ENCODE measurements at regions of chr13 and their contacts with region 1.

Region 1: DNA sequence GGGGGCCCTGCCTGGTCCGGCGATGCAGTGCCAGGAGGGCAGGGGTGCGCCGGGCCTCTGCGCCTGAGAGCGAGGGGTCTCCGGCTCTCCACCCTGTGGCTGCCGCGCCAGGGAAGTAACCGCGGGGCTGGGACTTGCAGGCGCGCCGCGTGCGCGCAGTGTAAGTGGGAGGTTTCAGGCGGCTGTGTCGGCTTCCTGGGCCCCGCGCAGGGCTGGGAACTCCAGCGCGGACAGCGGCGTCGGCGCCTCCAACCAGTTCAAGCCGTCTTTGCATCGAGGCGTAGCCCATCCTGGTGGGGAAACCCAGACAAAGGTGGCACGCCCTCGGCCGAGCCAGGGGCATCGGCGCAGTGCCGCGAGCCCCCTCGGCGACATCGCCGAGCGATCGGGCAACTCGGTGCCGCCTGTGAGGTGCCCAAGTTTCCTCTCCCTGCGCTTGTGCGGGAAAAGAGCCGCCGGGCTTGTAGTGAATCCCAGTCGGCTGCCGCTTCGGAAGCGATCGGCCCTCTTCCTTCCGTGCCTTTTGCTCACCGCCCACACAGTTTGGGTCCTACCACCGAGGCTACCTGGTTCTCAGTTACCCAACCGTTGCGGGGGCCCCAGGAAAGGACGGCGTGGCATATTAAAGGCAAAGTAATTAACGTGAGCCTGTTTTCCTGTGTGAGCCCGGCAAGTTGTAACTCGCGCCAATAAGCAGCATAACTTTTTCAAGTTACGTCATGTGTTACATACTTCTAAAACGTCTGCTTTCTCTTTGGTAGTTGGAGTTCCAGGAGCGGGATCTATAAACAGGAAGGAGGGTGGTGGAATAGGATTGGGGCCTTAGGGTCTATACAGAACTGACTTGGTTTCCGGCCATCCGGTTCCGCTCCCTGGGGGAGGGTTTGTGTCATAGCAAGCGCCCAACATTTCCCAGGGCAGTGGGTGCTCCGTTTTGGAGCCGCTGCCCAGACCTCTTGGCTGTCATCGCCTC is 1.2 kb downstream of the LRCH1 start:
- DNase-seq: peak; percentile 82
- H3K4me3 ChIP-seq: peak overlapping the region; percentile 86
- H3K27ac ChIP-seq: peak overlapping the region; percentile 74
- H3K4me1 ChIP-seq: peaks cover 40% of the 10 kb centered on the region
- CTCF ChIP-seq: 0 out of 2 replicates have a peak, but pooled peaks have one; percentile 10

Region 2: GRCh38 chr13:46369506-46370277 is 184.5 kb before region 1 on chr13:
- CTCF ChIA-PET with region 1: no interaction called
- POLR2A ChIA-PET with region 1: interaction called, 3 read pairs
- intact Hi-C with region 1: loop called (anchors 5 kb)
- DNase-seq: peak; percentile 57
- H3K4me3 ChIP-seq: peak overlapping the region; percentile 83
- H3K27ac ChIP-seq: peak overlapping the region; percentile 96
- H3K4me1 ChIP-seq: peaks cover 54% of the 10 kb centered on the region
- CTCF ChIP-seq: no peak

Region 3: DNA sequence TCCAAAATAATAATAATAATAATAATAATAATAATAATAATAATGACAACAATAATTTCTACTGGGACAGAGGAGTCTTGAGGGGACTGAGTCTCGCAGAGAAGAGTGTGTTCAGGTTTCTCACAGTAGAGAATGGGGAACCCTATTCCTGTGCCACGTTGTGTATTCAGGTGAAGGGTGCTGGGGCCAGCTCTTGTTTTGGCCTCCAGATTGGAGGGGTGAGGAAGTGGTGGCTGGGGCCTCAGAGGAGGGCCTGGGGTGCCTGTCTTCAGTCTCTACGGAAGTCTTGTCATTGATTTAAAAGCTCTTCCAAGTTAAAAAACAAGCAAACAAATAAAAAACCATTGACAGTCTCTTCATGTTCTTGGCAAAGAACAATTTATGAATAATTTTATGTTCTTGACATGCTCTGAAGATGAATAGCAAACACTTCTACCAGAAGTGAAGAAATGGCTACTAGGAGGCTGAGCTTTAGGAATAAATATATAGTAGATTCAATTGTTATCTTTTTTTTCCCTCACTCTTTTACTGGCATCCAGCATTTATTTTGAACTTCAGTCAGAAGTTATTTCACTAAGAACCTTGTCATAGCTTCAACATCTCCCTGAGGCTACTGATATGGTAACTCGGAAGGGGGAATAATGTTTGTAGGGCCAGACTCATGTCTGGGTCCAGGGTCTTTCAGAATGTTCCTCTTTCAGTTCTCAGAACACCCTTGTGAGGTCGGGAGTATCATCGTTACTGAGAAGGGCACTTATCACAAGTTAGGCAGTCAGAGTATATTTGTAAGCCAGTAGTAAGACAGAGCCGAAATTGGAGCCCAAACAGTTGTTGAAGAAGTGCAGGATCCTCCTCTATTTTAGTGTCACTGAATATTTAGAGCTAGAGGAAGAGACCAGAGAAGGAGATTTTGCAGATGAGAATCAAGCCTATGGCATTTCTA is 11.9 kb after region 1 on chr13:
- CTCF ChIA-PET with region 1: interaction called, 4 read pairs
- POLR2A ChIA-PET with region 1: interaction called, 11 read pairs
- intact Hi-C with region 1: no loop called
- DNase-seq: no peak
- H3K4me3 ChIP-seq: no peak overlapping the region
- H3K27ac ChIP-seq: no peak overlapping the region
- H3K4me1 ChIP-seq: peaks cover 20% of the 10 kb centered on the region
- CTCF ChIP-seq: no peak

Region 4: DNA sequence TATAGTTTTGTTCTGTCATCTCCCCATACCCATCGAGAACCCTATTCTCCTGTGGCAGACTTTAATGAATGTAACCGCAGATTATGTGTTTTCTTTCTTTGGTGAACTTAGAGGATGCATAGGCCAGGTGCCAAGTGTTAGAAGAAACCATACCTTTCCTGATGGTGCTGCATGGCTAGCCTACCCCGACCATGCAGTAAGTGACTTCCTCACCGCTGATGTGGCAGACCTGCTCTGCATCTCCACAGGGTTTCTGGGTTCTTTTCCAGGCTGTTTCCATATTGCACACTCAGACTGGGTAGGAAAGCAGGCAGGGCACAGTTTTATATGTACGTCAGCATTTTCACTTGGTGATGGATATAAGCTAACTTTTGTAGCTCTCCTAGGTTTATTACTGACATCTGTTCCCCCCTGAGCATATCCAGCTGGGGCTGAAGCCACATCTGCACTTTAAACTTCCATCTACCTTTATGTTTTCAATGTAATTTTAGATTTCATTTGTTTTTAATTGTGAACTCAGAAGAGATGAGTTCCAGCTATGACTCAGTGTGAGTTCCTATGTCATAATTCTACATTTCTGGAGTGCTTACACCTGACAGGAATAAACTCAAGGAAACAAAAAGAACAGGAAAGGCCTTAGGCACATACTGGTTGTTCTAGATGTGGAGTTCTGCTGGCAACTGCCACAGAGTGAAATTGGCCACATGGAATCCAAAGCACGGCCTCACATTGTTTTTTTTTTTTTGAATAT is 41.1 kb after region 1 on chr13:
- CTCF ChIA-PET with region 1: interaction called, 8 read pairs
- POLR2A ChIA-PET with region 1: interaction called, 13 read pairs
- intact Hi-C with region 1: loop called (anchors 1 kb)
- DNase-seq: peak; percentile 94
- H3K4me3 ChIP-seq: peak overlapping the region; percentile 58
- H3K27ac ChIP-seq: peak overlapping the region; percentile 98
- H3K4me1 ChIP-seq: peaks cover 99% of the 10 kb centered on the region
- CTCF ChIP-seq: no peak; the same call in 1 of the 2 replicates

Region 5: DNA sequence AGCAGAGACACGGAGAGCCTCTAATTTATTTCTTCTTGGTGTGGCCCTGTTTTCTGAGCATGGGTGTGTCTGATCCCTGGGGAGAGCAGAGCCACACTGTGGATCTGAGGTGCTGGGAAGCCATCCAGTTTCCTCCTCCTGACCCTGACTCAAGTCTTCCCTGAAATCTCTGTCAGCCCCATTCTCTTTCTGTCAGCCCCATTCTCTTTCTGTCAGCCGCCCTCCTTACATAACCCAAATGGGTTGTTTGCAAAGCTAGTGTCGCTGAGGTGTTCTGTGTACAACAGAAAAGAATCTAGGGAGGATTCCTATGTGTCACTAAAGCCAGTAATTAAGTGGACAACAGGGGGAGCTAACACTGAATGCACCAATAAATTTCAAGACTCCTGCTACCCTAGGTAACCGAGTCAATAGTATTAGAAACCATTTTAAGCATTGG is 49.0 kb after region 1 on chr13:
- CTCF ChIA-PET with region 1: interaction called, 5 read pairs
- POLR2A ChIA-PET with region 1: interaction called, 12 read pairs
- intact Hi-C with region 1: no loop called
- DNase-seq: peak; percentile 53
- H3K4me3 ChIP-seq: no peak overlapping the region
- H3K27ac ChIP-seq: peak overlapping the region; percentile 9
- H3K4me1 ChIP-seq: peaks cover 93% of the 10 kb centered on the region
- CTCF ChIP-seq: peak; percentile 80

Region 6: GRCh38 chr13:46668302-46668720 is 114.1 kb after region 1 on chr13:
- CTCF ChIA-PET with region 1: no interaction called
- POLR2A ChIA-PET with region 1: interaction called, 6 read pairs
- intact Hi-C with region 1: loop called (anchors 5 kb)
- DNase-seq: peak; percentile 18
- H3K4me3 ChIP-seq: peak overlapping the region; percentile 58
- H3K27ac ChIP-seq: peak overlapping the region; percentile 67
- H3K4me1 ChIP-seq: peaks cover 58% of the 10 kb centered on the region
- CTCF ChIP-seq: no peak

Region 7: DNA sequence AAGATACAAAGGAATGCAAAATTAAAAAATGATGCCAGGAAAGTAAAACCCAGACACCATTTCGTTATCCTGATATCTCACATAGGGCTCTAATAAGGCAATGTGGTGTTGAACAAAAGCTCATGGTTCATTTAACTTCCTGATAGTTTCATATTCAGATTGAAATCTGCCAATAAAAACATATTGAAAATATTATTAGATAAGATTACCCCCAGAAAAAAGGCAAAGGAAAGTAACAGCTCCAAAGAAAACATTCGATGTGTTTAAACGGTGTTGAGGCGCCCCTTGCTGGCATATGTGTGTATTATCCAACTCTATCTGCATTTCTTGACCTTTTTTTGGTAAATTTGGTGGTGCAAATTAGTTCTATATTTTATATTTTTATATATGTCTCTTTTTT is 166.9 kb after region 1 on chr13:
- CTCF ChIA-PET with region 1: interaction called, 7 read pairs
- POLR2A ChIA-PET with region 1: interaction called, 5 read pairs
- intact Hi-C with region 1: loop called (anchors 1 kb)
- DNase-seq: peak; percentile 62
- H3K4me3 ChIP-seq: no peak overlapping the region
- H3K27ac ChIP-seq: no peak overlapping the region
- H3K4me1 ChIP-seq: peaks cover 9% of the 10 kb centered on the region
- CTCF ChIP-seq: peak; percentile 90

Measured in OCI-LY7 (cell line).